Gastrocnemius medialis (tissue), 4 donors: ENCODE measurements at regions of chr21 and their contacts with region 1.

Region 1: DNA sequence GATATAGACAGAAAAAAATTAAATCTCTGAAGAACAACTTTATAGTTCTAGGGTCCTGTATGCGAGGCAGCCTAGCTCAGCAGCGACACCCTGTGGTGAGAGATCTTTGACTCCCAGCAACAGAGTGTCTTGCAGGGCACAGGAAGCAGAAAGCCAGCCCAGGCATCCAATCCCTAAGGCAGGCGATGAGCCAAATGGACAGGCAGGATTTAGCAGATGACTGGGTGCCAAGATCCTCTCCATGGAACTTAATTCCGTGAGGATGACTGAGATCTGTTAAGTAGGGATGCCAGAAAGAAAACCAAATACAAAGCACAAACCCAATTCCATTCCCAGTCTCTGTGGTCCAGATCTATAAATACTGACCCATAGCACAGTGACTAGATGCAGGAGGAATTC is 38.8 kb downstream of the HLCS start:
- DNase-seq: peak; percentile 53 to 71
- ATAC-seq: peak; percentile 59 to 89
- H3K4me3 ChIP-seq: no peak overlapping the region
- H3K27ac ChIP-seq: no peak overlapping the region
- H3K4me1 ChIP-seq: peaks cover 13 to 20% of the 10 kb centered on the region in 2 donors
- H3K27me3 ChIP-seq: no peaks in the 10 kb centered on the region
- CTCF ChIP-seq: peak; percentile 80 to 94 (median 84)
- POLR2A ChIP-seq: no peak

Region 2: DNA sequence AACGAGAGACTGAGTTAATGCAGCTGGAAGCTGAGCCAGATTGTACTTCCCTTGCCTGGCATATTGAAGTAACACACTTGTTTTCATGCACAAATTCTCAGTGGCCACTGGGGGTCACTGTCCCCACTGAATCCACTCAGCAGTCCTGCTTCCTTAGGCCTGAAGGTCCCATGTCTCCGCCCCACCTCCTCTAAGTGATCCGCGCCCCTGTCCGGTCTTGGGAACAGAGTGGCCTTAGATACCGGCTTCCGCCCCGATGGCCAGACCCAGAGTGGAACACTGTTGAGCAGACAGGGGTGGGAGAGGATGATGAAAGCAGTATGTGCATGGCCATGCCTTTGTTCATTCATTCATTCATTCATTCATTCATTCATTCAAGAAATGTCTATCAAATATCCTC is 507.7 kb before region 1 on chr21:
- in situ Hi-C with region 1: no loop called
- intact Hi-C with region 1: loop called (anchors 2 kb)
- DNase-seq: peak; percentile 77 to 84
- ATAC-seq: peak; percentile 90 to 94
- H3K4me3 ChIP-seq: no peak overlapping the region
- H3K27ac ChIP-seq: peak overlapping the region in 1 of 4 donors; percentile 30
- H3K4me1 ChIP-seq: peaks cover 0 to 3% of the 10 kb centered on the region in 2 donors
- H3K27me3 ChIP-seq: no peaks in the 10 kb centered on the region
- CTCF ChIP-seq: peak; percentile 76 to 84 (median 81)
- POLR2A ChIP-seq: no peak

Region 3: GRCh38 chr21:36504067-36505058 is 423.4 kb before region 1 on chr21:
- in situ Hi-C with region 1: loop called (anchors 5 to 25 kb)
- intact Hi-C with region 1: loop called (anchors 2 kb)
- DNase-seq: no peak
- ATAC-seq: peak in 1 of 2 donors; percentile 44
- H3K4me3 ChIP-seq: no peak overlapping the region
- H3K27ac ChIP-seq: no peak overlapping the region
- H3K4me1 ChIP-seq: no peaks in the 10 kb centered on the region
- H3K27me3 ChIP-seq: no peaks in the 10 kb centered on the region
- CTCF ChIP-seq: peak; percentile 78 to 94 (median 89)
- POLR2A ChIP-seq: no peak

Region 4: GRCh38 chr21:36630485-36631206 is 297.1 kb before region 1 on chr21:
- in situ Hi-C with region 1: loop called in 3 of 4 experiments (anchors 10 kb)
- intact Hi-C with region 1: loop called (anchors 1 kb)
- DNase-seq: peak; percentile 11 to 40
- ATAC-seq: peak in 1 of 2 donors; percentile 80
- H3K4me3 ChIP-seq: no peak overlapping the region
- H3K27ac ChIP-seq: no peak overlapping the region
- H3K4me1 ChIP-seq: peaks cover 0 to 6% of the 10 kb centered on the region in 2 donors
- H3K27me3 ChIP-seq: no peaks in the 10 kb centered on the region
- CTCF ChIP-seq: peak; percentile 44 to 78 (median 75)
- POLR2A ChIP-seq: no peak

Region 5: GRCh38 chr21:36661511-36662309 is 266.0 kb before region 1 on chr21:
- in situ Hi-C with region 1: loop called in 1 of 4 experiments (anchors 10 kb)
- intact Hi-C with region 1: loop called (anchors 1 kb)
- DNase-seq: peak in 1 of 2 donors; percentile 22
- ATAC-seq: no peak
- H3K4me3 ChIP-seq: no peak overlapping the region
- H3K27ac ChIP-seq: no peak overlapping the region
- H3K4me1 ChIP-seq: peaks cover 6 to 15% of the 10 kb centered on the region in 2 donors
- H3K27me3 ChIP-seq: peaks cover 0 to 4% (median 0%) of the 10 kb centered on the region in 3 donors
- CTCF ChIP-seq: peak; percentile 16 to 56 (median 45)
- POLR2A ChIP-seq: no peak

Region 6: DNA sequence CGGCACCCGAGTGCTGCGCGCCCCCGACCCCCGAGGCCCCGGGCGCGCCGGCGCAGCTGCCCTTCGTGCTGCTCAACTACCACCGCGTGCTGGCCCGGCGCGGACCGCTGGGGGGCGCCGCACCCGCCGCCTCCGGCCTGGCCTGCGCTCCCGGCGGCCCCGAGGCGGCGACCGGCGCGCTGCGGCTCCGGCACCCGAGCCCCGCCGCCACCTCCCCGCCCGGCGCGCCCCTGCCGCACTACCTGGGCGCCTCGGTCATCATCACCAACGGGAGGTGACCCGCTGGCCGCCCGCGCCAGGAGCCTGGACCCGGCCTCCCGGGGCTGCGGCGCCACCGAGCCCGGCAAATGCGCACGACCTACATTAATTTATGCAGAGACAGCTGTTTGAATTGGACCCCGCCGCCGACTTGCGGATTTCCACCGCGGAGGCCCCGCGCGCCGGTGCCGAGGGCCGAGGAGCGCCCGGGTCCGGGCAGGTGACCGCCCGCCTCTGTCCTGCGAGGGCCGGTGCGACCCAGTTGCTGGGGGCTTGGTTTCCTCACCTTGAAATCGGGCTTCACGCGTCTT is 179.8 kb before region 1 on chr21:
- in situ Hi-C with region 1: loop called in 1 of 4 experiments (anchors 10 kb)
- intact Hi-C with region 1: loop called (anchors 5 kb)
- DNase-seq: no peak
- ATAC-seq: peak; percentile 66 to 72
- H3K4me3 ChIP-seq: peak overlapping the region; percentile 16 to 52 (median 38)
- H3K27ac ChIP-seq: no peak overlapping the region
- H3K4me1 ChIP-seq: peaks cover 5 to 9% of the 10 kb centered on the region in 2 donors
- H3K27me3 ChIP-seq: no peaks in the 10 kb centered on the region
- CTCF ChIP-seq: peak in 2 of 5 experiments; percentile 15 to 31
- POLR2A ChIP-seq: no peak

Region 7: GRCh38 chr21:36945496-36946138 is 17.9 kb after region 1 on chr21:
- in situ Hi-C with region 1: no loop called
- intact Hi-C with region 1: no loop called
- DNase-seq: no peak
- ATAC-seq: no peak
- H3K4me3 ChIP-seq: no peak overlapping the region
- H3K27ac ChIP-seq: no peak overlapping the region
- H3K4me1 ChIP-seq: no peaks in the 10 kb centered on the region
- H3K27me3 ChIP-seq: no peaks in the 10 kb centered on the region
- CTCF ChIP-seq: no peak
- POLR2A ChIP-seq: no peak

Region 8: DNA sequence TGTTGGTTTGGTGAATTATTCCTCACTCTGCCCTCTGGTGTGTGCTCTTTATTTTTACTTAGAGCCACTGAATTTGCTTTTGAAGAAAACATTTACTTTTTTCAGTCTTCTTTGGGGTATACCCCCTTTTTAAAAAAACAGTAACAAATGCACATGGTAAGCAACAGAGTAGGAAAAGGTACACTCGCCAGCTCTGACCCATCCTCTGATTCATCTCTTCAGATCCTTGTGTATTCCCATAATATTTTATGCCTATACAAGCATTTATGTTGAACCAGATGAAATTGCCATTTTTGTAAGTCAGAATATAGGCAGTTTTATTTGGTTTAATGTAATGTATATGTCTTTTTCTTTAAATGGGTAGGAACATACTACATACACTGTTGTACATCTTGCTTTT is 173.7 kb after region 1 on chr21:
- in situ Hi-C with region 1: no loop called
- intact Hi-C with region 1: no loop called
- DNase-seq: no peak
- ATAC-seq: no peak
- H3K4me3 ChIP-seq: no peak overlapping the region
- H3K27ac ChIP-seq: no peak overlapping the region
- H3K4me1 ChIP-seq: no peaks in the 10 kb centered on the region
- H3K27me3 ChIP-seq: no peaks in the 10 kb centered on the region
- CTCF ChIP-seq: no peak
- POLR2A ChIP-seq: no peak